ENCODE measurements at regions of chr5 and their contacts with region 1.

Region 1: GRCh38 chr5:175534070-175534932 is 55.9 kb downstream of the SFXN1 start:
- DNase-seq: peak; percentile 87
- H3K4me3 Mint-ChIP-seq: no peak overlapping the region
- H3K27ac Mint-ChIP-seq: peak overlapping the region; percentile 46
- H3K4me1 Mint-ChIP-seq: peaks cover 45% of the 10 kb centered on the region
- H3K27me3 Mint-ChIP-seq: no peaks in the 10 kb centered on the region

Region 2: GRCh38 chr5:175321927-175322532 is 212.3 kb before region 1 on chr5:
- CTCF ChIA-PET with region 1: no interaction called
- POLR2A ChIA-PET with region 1: no interaction called
- DNase-seq: peak; percentile 64
- H3K4me3 Mint-ChIP-seq: no peak overlapping the region
- H3K27ac Mint-ChIP-seq: no peak overlapping the region
- H3K4me1 Mint-ChIP-seq: no peaks in the 10 kb centered on the region
- H3K27me3 Mint-ChIP-seq: no peaks in the 10 kb centered on the region

Region 3: GRCh38 chr5:175444060-175444904 is 90.0 kb before region 1 on chr5 and contains the start of gene DRD1:
- CTCF ChIA-PET with region 1: no interaction called
- POLR2A ChIA-PET with region 1: no interaction called
- DNase-seq: peak; percentile 33
- H3K4me3 Mint-ChIP-seq: no peak within 1 kb of the TSS
- H3K27ac Mint-ChIP-seq: no peak within 1 kb of the TSS
- H3K4me1 Mint-ChIP-seq: peaks cover 6% of the 10 kb centered on the region
- H3K27me3 Mint-ChIP-seq: peaks cover 78% of the 10 kb centered on the region
- total RNA-seq, gene DRD1: not detected

Region 4: GRCh38 chr5:175521313-175521833 is 12.9 kb before region 1 on chr5:
- CTCF ChIA-PET with region 1: interaction called, 56 read pairs
- POLR2A ChIA-PET with region 1: no interaction called
- DNase-seq: peak; percentile 44
- H3K4me3 Mint-ChIP-seq: peak overlapping the region; percentile 41
- H3K27ac Mint-ChIP-seq: peak overlapping the region; percentile 91
- H3K4me1 Mint-ChIP-seq: peaks cover 72% of the 10 kb centered on the region
- H3K27me3 Mint-ChIP-seq: no peaks in the 10 kb centered on the region

Region 5: DNA sequence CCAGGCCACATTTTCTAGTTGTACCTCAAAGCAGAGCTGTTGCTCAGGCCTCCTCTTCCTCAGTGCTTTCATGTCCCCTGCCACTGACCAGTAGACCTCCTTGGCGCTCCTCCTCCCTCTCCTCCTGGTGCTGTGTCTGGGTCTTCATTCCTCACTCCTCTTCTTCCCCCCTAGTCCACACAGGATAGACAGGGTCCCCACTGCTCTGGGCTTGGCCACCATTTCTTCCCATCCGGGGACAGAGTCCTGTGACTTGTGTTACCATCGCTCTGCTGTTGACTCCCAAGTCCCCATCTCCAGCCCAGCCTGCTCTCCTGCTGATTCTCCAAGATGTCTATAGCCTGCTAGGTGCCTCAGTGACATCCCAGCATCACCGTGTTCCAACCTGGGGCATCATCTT is 35.4 kb after region 1 on chr5:
- CTCF ChIA-PET with region 1: interaction called, 11 read pairs
- POLR2A ChIA-PET with region 1: no interaction called
- DNase-seq: no peak
- H3K4me3 Mint-ChIP-seq: no peak overlapping the region
- H3K27ac Mint-ChIP-seq: no peak overlapping the region
- H3K4me1 Mint-ChIP-seq: peaks cover 2% of the 10 kb centered on the region
- H3K27me3 Mint-ChIP-seq: peaks cover 21% of the 10 kb centered on the region

Region 6: GRCh38 chr5:175657593-175658271 is 123.4 kb after region 1 on chr5 and contains the start of gene HRH2:
- CTCF ChIA-PET with region 1: interaction called, 18 read pairs
- POLR2A ChIA-PET with region 1: no interaction called
- DNase-seq: peak; percentile 63
- H3K4me3 Mint-ChIP-seq: peak within 1 kb of the TSS; percentile 97
- H3K27ac Mint-ChIP-seq: peak within 1 kb of the TSS; percentile 87
- H3K4me1 Mint-ChIP-seq: peaks cover 86% of the 10 kb centered on the region
- H3K27me3 Mint-ChIP-seq: peaks cover 3% of the 10 kb centered on the region
- total RNA-seq, gene HRH2: 21.7 to 25.5 TPM

Region 7: DNA sequence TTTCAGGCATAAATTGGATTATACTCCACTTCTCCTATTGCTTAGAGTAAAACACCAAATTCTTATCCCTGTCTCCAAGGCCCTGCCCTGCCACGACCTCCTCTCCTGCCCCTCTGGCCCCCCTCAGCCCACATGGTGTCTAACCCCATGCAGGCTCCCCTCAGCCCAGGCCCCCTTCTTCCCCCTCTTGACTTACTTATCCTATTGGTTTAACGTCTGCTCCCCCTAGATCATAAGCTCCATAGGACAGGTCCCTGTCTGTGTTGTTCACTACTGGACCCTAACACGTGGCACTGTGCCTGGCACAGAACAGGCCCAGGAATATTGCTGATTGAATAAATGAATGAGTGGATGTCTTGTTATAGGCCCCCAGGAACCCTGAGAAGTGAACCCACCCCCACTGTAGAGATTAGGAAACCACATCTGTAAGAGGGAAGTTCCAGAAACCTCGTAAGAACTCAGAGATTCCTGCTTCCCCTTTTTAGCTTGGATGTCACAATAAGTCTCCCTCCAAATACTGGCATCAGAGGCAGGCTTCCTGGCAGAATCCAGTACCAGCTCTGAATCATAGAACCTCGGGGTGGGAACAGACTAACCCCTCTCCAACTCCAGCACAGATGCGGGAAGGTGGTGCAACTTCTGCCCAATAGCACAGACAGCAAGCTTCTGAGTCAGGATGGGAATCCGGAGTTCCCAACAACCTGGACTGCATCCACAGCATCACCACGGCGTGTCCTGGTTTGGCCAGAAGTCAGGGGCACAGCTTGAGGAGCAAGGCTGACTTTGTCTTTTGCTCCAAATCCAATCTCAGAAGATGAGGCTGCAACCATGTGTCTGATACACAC is 155.1 kb after region 1 on chr5:
- CTCF ChIA-PET with region 1: interaction called, 63 read pairs
- POLR2A ChIA-PET with region 1: no interaction called
- DNase-seq: no peak
- H3K4me3 Mint-ChIP-seq: no peak overlapping the region
- H3K27ac Mint-ChIP-seq: no peak overlapping the region
- H3K4me1 Mint-ChIP-seq: peaks cover 40% of the 10 kb centered on the region
- H3K27me3 Mint-ChIP-seq: no peaks in the 10 kb centered on the region

Region 8: DNA sequence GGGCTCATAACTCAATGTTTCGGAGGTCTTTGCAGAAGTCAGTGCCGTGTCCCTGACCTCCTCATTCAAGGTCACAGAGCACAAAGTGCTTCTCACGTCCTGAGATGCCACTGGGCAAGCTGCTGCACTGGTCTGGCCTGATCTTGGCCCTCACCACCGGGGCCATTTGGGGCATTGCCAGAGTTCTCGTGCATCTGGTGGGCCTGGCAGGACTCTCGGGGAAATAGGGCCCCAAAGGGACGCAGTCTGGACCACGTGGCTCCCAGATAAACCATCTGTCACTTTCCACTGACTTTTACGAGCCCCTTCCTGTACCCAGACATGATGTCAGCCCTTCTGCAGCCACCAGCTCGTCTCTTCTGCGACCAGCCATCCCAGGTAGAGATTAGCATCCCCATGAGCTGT is 178.4 kb after region 1 on chr5:
- CTCF ChIA-PET with region 1: interaction called, 56 read pairs
- POLR2A ChIA-PET with region 1: no interaction called
- DNase-seq: no peak
- H3K4me3 Mint-ChIP-seq: no peak overlapping the region
- H3K27ac Mint-ChIP-seq: no peak overlapping the region
- H3K4me1 Mint-ChIP-seq: no peaks in the 10 kb centered on the region
- H3K27me3 Mint-ChIP-seq: no peaks in the 10 kb centered on the region

Region 9: DNA sequence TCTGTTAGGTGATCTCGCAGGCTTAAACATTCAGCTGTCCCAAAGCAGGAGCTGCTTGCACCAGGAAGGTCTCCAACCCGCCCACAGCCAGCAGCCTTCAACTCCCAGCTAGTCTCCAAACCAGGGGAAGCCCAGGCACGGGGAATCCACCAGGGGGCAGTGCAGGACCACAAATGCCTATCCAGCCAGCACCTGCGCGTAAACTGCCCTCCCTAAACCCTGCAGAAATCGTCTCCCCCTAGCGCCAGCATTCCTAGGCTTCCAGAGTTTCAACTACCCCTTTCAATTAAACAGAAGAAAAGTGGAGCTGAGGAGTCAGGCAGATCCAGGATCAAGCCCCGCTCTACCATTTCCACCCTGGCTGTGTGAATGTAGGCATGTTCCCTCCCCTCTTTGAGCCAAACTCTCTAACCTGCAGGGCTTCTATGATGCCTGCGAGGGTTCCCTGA is 195.6 kb after region 1 on chr5:
- CTCF ChIA-PET with region 1: interaction called, 41 read pairs
- POLR2A ChIA-PET with region 1: no interaction called
- DNase-seq: peak; percentile 93
- H3K4me3 Mint-ChIP-seq: no peak overlapping the region
- H3K27ac Mint-ChIP-seq: no peak overlapping the region
- H3K4me1 Mint-ChIP-seq: peaks cover 6% of the 10 kb centered on the region
- H3K27me3 Mint-ChIP-seq: peaks cover 12% of the 10 kb centered on the region

Region 10: GRCh38 chr5:175867587-175868347 is 333.5 kb after region 1 on chr5:
- CTCF ChIA-PET with region 1: no interaction called
- POLR2A ChIA-PET with region 1: no interaction called
- DNase-seq: no peak
- H3K4me3 Mint-ChIP-seq: no peak overlapping the region
- H3K27ac Mint-ChIP-seq: no peak overlapping the region
- H3K4me1 Mint-ChIP-seq: no peaks in the 10 kb centered on the region
- H3K27me3 Mint-ChIP-seq: peaks cover 20% of the 10 kb centered on the region